Lower leg skin (tissue), 4 donors: ENCODE measurements at regions of chr22 and their contacts with region 1.

Region 1: GRCh38 chr22:31345331-31346254 is 553 bp downstream of the PATZ1 start:
- DNase-seq: peak; percentile 52 to 94
- H3K4me3 ChIP-seq: peak overlapping the region; percentile 47
- CTCF ChIP-seq: peak in 1 of 3 donors; percentile 41
- POLR2A ChIP-seq: no peak

Region 2: GRCh38 chr22:31286360-31287255 is 59.0 kb before region 1 on chr22:
- intact Hi-C with region 1: no loop called
- DNase-seq: peak; percentile 71 to 85
- H3K4me3 ChIP-seq: no peak overlapping the region
- CTCF ChIP-seq: no peak
- POLR2A ChIP-seq: no peak

Region 3: DNA sequence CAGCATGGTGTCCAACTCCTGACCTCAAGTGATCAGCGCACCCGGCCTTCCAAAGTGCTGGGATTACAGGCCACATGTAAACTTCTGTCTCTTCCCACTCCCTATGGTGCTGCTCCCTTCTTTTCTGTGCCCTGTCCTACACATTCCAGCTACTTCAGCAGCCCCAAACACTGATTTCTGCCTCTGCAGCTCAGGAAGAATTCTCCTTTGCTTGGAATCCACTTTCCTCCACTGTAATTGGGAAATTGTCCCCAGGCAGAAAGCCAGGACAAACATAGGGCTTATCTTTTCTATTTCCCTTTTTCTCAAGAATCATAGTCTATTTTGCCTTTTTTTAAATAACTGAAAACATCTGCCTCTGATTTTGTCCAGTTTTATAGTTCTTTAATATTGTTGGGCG is 32.5 kb after region 1 on chr22:
- intact Hi-C with region 1: no loop called
- DNase-seq: no peak
- H3K4me3 ChIP-seq: no peak overlapping the region
- CTCF ChIP-seq: no peak
- POLR2A ChIP-seq: no peak

Region 4: GRCh38 chr22:31496007-31496734 is 150.6 kb after region 1 on chr22 and contains the start of gene SFI1:
- intact Hi-C with region 1: loop called (anchors 10 kb)
- DNase-seq: peak; percentile 88 to 97
- H3K4me3 ChIP-seq: peak within 1 kb of the TSS; percentile 59
- CTCF ChIP-seq: no peak
- POLR2A ChIP-seq: no peak
- total RNA-seq, gene SFI1: 24.2 to 66.4 (median 32.2) TPM